Thyroid gland (tissue), 4 donors: ENCODE measurements at regions of chr18 and their contacts with region 1.

Region 1: GRCh38 chr18:48030616-48031480 is 100.4 kb upstream of the SMAD2 start:
- DNase-seq: peak; percentile 70 to 71
- H3K4me3 ChIP-seq: no peak overlapping the region
- H3K27ac ChIP-seq: peak overlapping the region in 2 of 3 donors; percentile 6 to 57
- H3K4me1 ChIP-seq: peaks cover 39 to 63% of the 10 kb centered on the region in 2 donors
- H3K27me3 ChIP-seq: no peaks in the 10 kb centered on the region
- CTCF ChIP-seq: peak; percentile 49 to 85 (median 74)
- POLR2A ChIP-seq: no peak

Region 2: GRCh38 chr18:47979611-47980200 is 51.1 kb before region 1 on chr18:
- intact Hi-C with region 1: no loop called
- DNase-seq: no peak
- H3K4me3 ChIP-seq: no peak overlapping the region
- H3K27ac ChIP-seq: no peak overlapping the region
- H3K4me1 ChIP-seq: no peaks in the 10 kb centered on the region
- H3K27me3 ChIP-seq: no peaks in the 10 kb centered on the region
- CTCF ChIP-seq: no peak
- POLR2A ChIP-seq: no peak

Region 3: GRCh38 chr18:48085781-48086487 is 55.1 kb after region 1 on chr18:
- intact Hi-C with region 1: no loop called
- DNase-seq: no peak
- H3K4me3 ChIP-seq: no peak overlapping the region
- H3K27ac ChIP-seq: no peak overlapping the region
- H3K4me1 ChIP-seq: no peaks in the 10 kb centered on the region
- H3K27me3 ChIP-seq: no peaks in the 10 kb centered on the region
- CTCF ChIP-seq: no peak
- POLR2A ChIP-seq: no peak

Region 4: GRCh38 chr18:48222118-48222517 is 191.3 kb after region 1 on chr18:
- intact Hi-C with region 1: loop called (anchors 10 kb)
- DNase-seq: peak; percentile 89 to 90
- H3K4me3 ChIP-seq: no peak overlapping the region
- H3K27ac ChIP-seq: peak overlapping the region in 1 of 3 donors; percentile 27
- H3K4me1 ChIP-seq: peaks cover 24 to 35% of the 10 kb centered on the region in 2 donors
- H3K27me3 ChIP-seq: no peaks in the 10 kb centered on the region
- CTCF ChIP-seq: no peak
- POLR2A ChIP-seq: no peak

Region 5: GRCh38 chr18:48330403-48331022 is 299.7 kb after region 1 on chr18:
- intact Hi-C with region 1: loop called (anchors 10 kb)
- DNase-seq: peak; percentile 60 to 70
- H3K4me3 ChIP-seq: no peak overlapping the region
- H3K27ac ChIP-seq: peak overlapping the region; percentile 65 to 83 (median 78)
- H3K4me1 ChIP-seq: peaks cover 35 to 60% of the 10 kb centered on the region in 2 donors
- H3K27me3 ChIP-seq: no peaks in the 10 kb centered on the region
- CTCF ChIP-seq: no peak
- POLR2A ChIP-seq: no peak